ENCODE measurements at regions of chr4 and their contacts with region 1.

Region 1: DNA sequence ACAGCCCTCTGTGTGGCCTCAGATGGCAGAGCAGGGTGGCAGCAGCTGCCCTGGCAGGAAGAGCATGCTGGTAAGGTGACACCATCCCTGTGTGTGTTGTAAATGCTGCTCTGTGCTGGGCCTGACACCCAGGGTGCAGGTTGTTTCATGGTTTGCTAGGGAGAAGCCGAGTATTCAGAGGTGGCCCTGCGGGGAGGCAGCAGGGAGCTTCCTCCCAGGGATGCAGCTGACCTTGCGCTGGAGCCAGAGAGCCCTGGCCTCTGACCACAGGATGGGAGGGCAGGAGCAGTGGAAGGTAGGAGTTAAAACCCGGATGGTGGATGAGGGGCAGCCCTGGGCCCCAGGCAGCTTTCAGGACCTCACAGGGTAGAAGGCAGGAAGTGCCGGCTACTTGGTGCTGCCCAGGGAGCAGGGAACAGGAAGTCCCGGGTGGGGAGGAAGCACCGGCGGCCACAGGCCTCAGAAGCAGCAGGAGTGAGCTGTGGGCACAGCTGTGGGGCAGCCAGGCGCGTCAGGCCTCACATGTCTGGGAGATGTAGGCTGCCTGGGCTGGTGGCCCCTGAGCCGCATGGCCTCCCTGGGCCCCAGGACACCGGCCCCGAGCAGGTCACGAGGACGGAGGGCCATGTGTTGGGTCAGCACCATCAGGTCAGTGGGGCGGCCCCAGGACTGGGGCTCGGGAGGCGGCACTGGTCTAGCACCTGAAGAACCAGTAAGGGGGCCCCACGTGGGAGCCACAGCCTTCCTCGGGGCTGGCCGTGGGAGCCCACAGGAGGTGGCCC is 19.1 kb downstream of the SH3BP2 start:
- DNase-seq: peak in 8 of 9 donors; percentile 40 to 69 (median 49)
- ATAC-seq: peak; percentile 79
- H3K4me3 ChIP-seq: peak overlapping the region; percentile 81
- H3K4me3 Mint-ChIP-seq: peak overlapping the region; percentile 81 to 99 (median 94)
- H3K27ac ChIP-seq: peak overlapping the region; percentile 85
- H3K27ac Mint-ChIP-seq: peak overlapping the region; percentile 93 to 99 (median 98)
- H3K4me1 ChIP-seq: peaks cover 39 to 46% of the 10 kb centered on the region in 2 donors
- H3K4me1 Mint-ChIP-seq: peaks cover 39 to 59% (median 53%) of the 10 kb centered on the region in 7 donors
- H3K27me3 ChIP-seq: no peaks in the 10 kb centered on the region
- H3K27me3 Mint-ChIP-seq: no peaks in the 10 kb centered on the region

Region 2: DNA sequence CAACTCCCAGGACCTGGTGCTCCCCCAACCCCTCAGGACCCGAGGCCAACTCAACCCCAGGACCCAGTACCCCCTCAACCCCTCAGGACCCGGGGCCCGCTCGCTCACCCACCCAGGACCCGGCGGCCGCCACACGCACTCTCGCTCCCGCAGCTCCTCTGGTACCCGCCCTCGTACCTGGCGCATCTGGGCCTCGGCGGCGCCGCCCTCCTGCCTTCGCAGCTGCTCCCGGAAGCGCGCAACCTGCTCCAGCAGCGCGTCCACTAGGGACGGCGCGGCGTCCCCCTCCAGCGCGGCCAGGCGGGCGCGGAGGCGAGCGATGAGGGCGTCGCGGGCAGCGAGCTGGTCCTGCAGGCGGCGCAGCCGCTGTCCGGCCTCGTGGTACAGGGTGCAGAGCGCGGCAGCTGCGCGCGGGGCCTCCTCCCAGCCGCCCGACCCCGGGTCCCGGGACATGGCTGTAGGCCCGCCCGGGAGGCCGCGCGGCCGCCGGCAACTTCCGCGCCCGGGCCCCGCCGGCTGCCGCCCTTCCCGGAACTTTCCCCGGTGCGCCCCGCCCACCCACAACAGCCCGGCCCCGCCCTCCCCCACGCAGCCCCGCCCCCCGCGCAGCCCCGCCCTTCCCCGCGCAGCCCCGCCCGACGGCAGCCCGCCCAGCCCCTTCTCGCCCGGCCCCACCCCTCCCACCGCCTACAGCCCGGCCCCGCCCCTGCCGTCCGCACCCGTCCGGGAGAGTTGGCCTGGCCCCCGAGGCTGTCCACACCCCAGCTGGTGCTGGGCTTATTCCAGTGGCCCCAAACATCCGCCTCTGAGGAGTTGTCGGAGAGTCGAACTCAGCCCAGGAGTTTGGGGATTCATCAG is 56.0 kb before region 1 on chr4 and contains the start of gene TNIP2:
- CTCF ChIA-PET with region 1: no interaction called
- POLR2A ChIA-PET with region 1: interaction called, 3 read pairs
- intact Hi-C with region 1: loop called in 1 of 2 experiments (anchors 2 kb)
- DNase-seq: peak; percentile 65 to 85 (median 74)
- ATAC-seq: peak; percentile 90
- H3K4me3 ChIP-seq: peak within 1 kb of the TSS; percentile 64
- H3K4me3 Mint-ChIP-seq: peak within 1 kb of the TSS; percentile 75 to 93 (median 87)
- H3K27ac ChIP-seq: peak within 1 kb of the TSS; percentile 91
- H3K27ac Mint-ChIP-seq: peak within 1 kb of the TSS; percentile 54 to 94 (median 86)
- H3K4me1 ChIP-seq: peaks cover 9 to 12% of the 10 kb centered on the region in 2 donors
- H3K4me1 Mint-ChIP-seq: peaks cover 22 to 29% (median 26%) of the 10 kb centered on the region in 7 donors
- H3K27me3 ChIP-seq: no peaks in the 10 kb centered on the region
- H3K27me3 Mint-ChIP-seq: no peaks in the 10 kb centered on the region
- total RNA-seq, gene TNIP2: 39.4 to 56.0 (median 43.6) TPM

Region 3: GRCh38 chr4:2800691-2801596 is 11.1 kb before region 1 on chr4:
- CTCF ChIA-PET with region 1: interaction called, 3 read pairs
- POLR2A ChIA-PET with region 1: interaction called, 20 read pairs
- intact Hi-C with region 1: loop called (anchors 1 kb)
- DNase-seq: peak in 2 of 9 donors; percentile 7 to 37
- ATAC-seq: peak; percentile 70
- H3K4me3 ChIP-seq: no peak overlapping the region
- H3K4me3 Mint-ChIP-seq: peak overlapping the region in 6 of 10 donors; percentile 13 to 96 (median 40)
- H3K27ac ChIP-seq: no peak overlapping the region
- H3K27ac Mint-ChIP-seq: peak overlapping the region in 8 of 9 donors; percentile 17 to 79 (median 41)
- H3K4me1 ChIP-seq: peaks cover 30 to 45% of the 10 kb centered on the region in 2 donors
- H3K4me1 Mint-ChIP-seq: peaks cover 25 to 47% (median 42%) of the 10 kb centered on the region in 7 donors
- H3K27me3 ChIP-seq: no peaks in the 10 kb centered on the region
- H3K27me3 Mint-ChIP-seq: no peaks in the 10 kb centered on the region

Region 4: DNA sequence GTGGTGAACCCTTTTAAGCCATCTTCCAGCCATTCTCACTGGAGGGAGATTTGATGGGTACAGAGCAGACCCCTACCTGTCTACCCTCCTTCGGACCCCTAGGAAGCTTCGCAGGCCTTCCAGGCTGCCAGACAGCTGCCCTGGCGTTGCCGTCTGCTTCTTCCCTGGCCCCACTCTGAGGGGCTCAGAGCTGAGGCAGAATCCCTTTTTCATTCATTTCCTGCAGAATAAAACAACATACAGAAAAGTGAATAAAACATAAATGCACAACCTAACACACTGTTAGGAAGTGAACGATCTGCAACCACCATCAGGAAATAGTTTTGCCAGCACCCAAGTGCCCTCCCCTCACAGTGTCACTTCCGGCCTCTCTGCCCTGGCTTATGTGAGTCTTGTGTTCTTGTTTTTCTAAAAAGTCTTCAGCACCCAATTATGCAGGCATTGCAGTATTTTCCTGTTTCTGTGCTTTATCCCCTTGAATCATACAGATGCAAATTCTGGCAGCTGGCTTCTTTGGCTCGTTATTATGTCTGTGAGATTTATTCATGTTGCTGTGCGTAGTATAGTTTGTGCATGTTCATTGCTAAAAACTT is 26.0 kb after region 1 on chr4:
- CTCF ChIA-PET with region 1: interaction called, 5 read pairs
- POLR2A ChIA-PET with region 1: interaction called, 100 read pairs
- intact Hi-C with region 1: loop called (anchors 1 to 2 kb)
- DNase-seq: peak in 7 of 9 donors; percentile 74 to 86 (median 83)
- ATAC-seq: peak; percentile 94
- H3K4me3 ChIP-seq: peak overlapping the region; percentile 66
- H3K4me3 Mint-ChIP-seq: peak overlapping the region; percentile 82 to 96 (median 88)
- H3K27ac ChIP-seq: peak overlapping the region; percentile 82
- H3K27ac Mint-ChIP-seq: peak overlapping the region; percentile 91 to 98 (median 94)
- H3K4me1 ChIP-seq: peaks cover 54 to 60% of the 10 kb centered on the region in 2 donors
- H3K4me1 Mint-ChIP-seq: peaks cover 48 to 83% (median 54%) of the 10 kb centered on the region in 7 donors
- H3K27me3 ChIP-seq: no peaks in the 10 kb centered on the region
- H3K27me3 Mint-ChIP-seq: no peaks in the 10 kb centered on the region

Region 5: DNA sequence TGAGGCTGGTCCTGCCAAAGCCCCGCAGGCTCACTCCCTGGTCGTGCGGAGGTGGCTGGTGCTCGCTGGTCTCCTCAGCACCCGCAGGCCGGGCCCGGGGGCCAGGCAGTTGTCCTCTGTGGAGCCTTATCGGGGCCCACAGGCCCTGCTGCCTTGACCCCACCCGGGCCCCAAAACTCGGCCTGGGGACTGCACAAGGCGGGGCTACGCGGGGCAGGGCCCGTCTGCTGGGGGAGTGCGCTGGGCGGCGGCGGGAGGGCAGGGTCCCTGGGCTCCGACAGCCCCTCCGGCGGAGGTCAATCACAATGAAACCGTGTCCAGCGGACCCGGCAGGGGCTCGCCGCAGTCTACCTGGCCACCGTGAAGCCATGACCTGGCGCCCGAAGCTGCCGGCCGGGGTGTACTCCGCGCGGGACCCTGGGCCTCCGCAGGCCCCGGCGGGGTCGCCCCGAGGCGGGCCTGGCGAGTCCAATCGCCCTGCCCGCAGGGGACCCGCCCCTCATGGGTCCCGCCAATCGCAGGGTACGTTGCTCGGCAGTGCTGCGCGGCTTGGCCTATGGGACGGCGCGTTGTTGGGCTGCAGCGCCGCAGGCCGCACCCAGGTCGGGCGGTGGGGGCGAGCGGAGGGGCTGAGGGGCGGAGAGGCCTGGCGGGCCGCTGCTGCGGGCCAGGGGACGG is 31.4 kb after region 1 on chr4 and contains the start of gene ADD1:
- CTCF ChIA-PET with region 1: interaction called, 5 read pairs
- POLR2A ChIA-PET with region 1: interaction called, 100 read pairs
- intact Hi-C with region 1: loop called (anchors 1 to 2 kb)
- DNase-seq: peak; percentile 84 to 100 (median 94)
- ATAC-seq: peak; percentile 98
- H3K4me3 ChIP-seq: peak within 1 kb of the TSS; percentile 80
- H3K4me3 Mint-ChIP-seq: peak within 1 kb of the TSS; percentile 87 to 100 (median 92)
- H3K27ac ChIP-seq: peak within 1 kb of the TSS; percentile 95
- H3K27ac Mint-ChIP-seq: peak within 1 kb of the TSS; percentile 85 to 97 (median 93)
- H3K4me1 ChIP-seq: peaks cover 33 to 40% of the 10 kb centered on the region in 2 donors
- H3K4me1 Mint-ChIP-seq: peaks cover 39 to 75% (median 59%) of the 10 kb centered on the region in 7 donors
- H3K27me3 ChIP-seq: no peaks in the 10 kb centered on the region
- H3K27me3 Mint-ChIP-seq: no peaks in the 10 kb centered on the region
- total RNA-seq, gene ADD1: 211 to 300 (median 282) TPM

Region 6: GRCh38 chr4:2934813-2935761 is 123.1 kb after region 1 on chr4:
- CTCF ChIA-PET with region 1: interaction called, 3 read pairs
- POLR2A ChIA-PET with region 1: no interaction called
- intact Hi-C with region 1: loop called in 1 of 2 experiments (anchors 2 kb)
- DNase-seq: peak; percentile 90 to 99 (median 95)
- ATAC-seq: peak; percentile 81
- H3K4me3 ChIP-seq: peak overlapping the region; percentile 97
- H3K4me3 Mint-ChIP-seq: peak overlapping the region; percentile 76 to 91 (median 84)
- H3K27ac ChIP-seq: peak overlapping the region; percentile 92
- H3K27ac Mint-ChIP-seq: peak overlapping the region; percentile 67 to 91 (median 87)
- H3K4me1 ChIP-seq: peaks cover 38 to 46% of the 10 kb centered on the region in 2 donors
- H3K4me1 Mint-ChIP-seq: peaks cover 17 to 44% (median 37%) of the 10 kb centered on the region in 7 donors
- H3K27me3 ChIP-seq: no peaks in the 10 kb centered on the region
- H3K27me3 Mint-ChIP-seq: no peaks in the 10 kb centered on the region